ENCODE measurements at regions of chr6 and their contacts with region 1.

Region 1: GRCh38 chr6:16183187-16183664 is 54.3 kb downstream of the MYLIP start:
- DNase-seq: peak in 6 of 9 donors; percentile 25 to 64 (median 58)
- ATAC-seq: peak; percentile 35
- H3K4me3 ChIP-seq: no peak overlapping the region
- H3K4me3 Mint-ChIP-seq: peak overlapping the region in 5 of 10 donors; percentile 1 to 62 (median 39)
- H3K27ac ChIP-seq: no peak overlapping the region
- H3K27ac Mint-ChIP-seq: peak overlapping the region in 8 of 9 donors; percentile 9 to 73 (median 64)
- H3K4me1 ChIP-seq: peaks cover 10 to 21% of the 10 kb centered on the region in 2 donors
- H3K4me1 Mint-ChIP-seq: peaks cover 5 to 50% (median 43%) of the 10 kb centered on the region in 7 donors
- H3K27me3 ChIP-seq: no peaks in the 10 kb centered on the region
- H3K27me3 Mint-ChIP-seq: peaks cover 0 to 19% (median 0%) of the 10 kb centered on the region in 5 donors

Region 2: GRCh38 chr6:15662326-15663129 is 520.7 kb before region 1 on chr6 and contains the start of gene DTNBP1:
- CTCF ChIA-PET with region 1: no interaction called
- POLR2A ChIA-PET with region 1: no interaction called
- intact Hi-C with region 1: loop called in 1 of 2 experiments (anchors 1 kb)
- DNase-seq: peak; percentile 74 to 93 (median 84)
- ATAC-seq: peak; percentile 90
- H3K4me3 ChIP-seq: peak within 1 kb of the TSS; percentile 82
- H3K4me3 Mint-ChIP-seq: peak within 1 kb of the TSS; percentile 75 to 93 (median 88)
- H3K27ac ChIP-seq: peak within 1 kb of the TSS; percentile 71
- H3K27ac Mint-ChIP-seq: peak within 1 kb of the TSS; percentile 71 to 90 (median 82)
- H3K4me1 ChIP-seq: peaks cover 11 to 20% of the 10 kb centered on the region in 2 donors
- H3K4me1 Mint-ChIP-seq: peaks cover 20 to 47% (median 39%) of the 10 kb centered on the region in 7 donors
- H3K27me3 ChIP-seq: no peaks in the 10 kb centered on the region
- H3K27me3 Mint-ChIP-seq: peaks cover 0 to 20% (median 4%) of the 10 kb centered on the region in 5 donors
- total RNA-seq, gene DTNBP1: 19.8 to 30.8 (median 25.3) TPM

Region 3: DNA sequence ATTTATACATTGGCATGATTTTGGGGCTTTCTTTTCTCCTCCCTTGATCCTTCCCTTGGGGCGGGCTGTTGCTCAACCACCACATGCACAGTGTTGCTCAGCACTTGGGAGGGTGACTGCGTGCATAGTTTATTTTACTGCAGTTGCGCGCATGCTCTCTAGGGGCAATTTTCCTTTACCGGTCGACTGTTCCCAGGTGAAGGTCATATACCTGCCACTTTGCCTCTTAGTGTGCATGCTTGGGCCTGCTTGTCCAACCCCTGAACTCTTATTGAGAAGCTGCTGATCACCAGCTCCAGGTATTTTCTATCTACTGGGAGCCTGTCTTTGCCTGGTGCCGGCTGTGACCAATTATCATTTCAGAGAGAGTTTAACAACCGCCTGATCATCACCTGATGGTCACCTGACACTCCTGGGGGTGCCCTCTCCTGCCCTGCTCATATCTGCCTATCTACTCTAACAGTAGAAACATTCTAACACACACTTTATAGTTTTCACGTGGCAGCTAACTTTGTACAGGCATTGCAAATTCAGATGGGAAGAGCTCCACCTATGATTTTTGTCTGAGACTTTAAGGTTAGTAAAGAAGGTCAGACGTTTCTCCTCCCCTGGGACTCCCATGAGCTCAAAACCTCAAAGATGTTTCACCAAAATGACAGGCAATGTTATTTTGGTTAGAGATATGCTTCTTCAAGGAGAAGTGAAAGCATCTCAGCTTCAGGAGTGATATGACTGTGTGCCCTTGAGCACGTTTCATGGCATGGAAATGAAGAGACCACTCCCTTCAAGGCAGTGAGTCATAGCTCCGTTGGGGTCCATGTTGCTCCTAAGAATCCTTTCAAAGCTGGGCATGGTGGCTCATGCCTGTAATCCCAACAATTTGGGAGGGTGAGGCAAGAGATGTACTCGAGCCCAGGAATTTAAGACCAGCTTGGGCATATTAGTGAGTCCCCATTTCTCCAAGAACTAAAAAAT is 281.8 kb before region 1 on chr6:
- CTCF ChIA-PET with region 1: no interaction called
- POLR2A ChIA-PET with region 1: interaction called, 3 read pairs
- intact Hi-C with region 1: loop called in 1 of 2 experiments (anchors 5 kb)
- DNase-seq: peak in 1 of 9 donors; percentile 34
- ATAC-seq: peak; percentile 80
- H3K4me3 ChIP-seq: no peak overlapping the region
- H3K4me3 Mint-ChIP-seq: peak overlapping the region in 1 of 10 donors; percentile 70
- H3K27ac ChIP-seq: no peak overlapping the region
- H3K27ac Mint-ChIP-seq: peak overlapping the region in 1 of 9 donors; percentile 92
- H3K4me1 ChIP-seq: no peaks in the 10 kb centered on the region
- H3K4me1 Mint-ChIP-seq: peaks cover 0 to 35% (median 0%) of the 10 kb centered on the region in 7 donors
- H3K27me3 ChIP-seq: no peaks in the 10 kb centered on the region
- H3K27me3 Mint-ChIP-seq: peaks cover 0 to 7% (median 0%) of the 10 kb centered on the region in 5 donors

Region 4: GRCh38 chr6:16136621-16137450 is 46.4 kb before region 1 on chr6:
- CTCF ChIA-PET with region 1: interaction called, 4 read pairs
- POLR2A ChIA-PET with region 1: interaction called, 17 read pairs
- intact Hi-C with region 1: loop called in 1 of 2 experiments (anchors 1 kb)
- DNase-seq: peak in 6 of 9 donors; percentile 24 to 50 (median 32)
- ATAC-seq: peak; percentile 48
- H3K4me3 ChIP-seq: peak overlapping the region; percentile 35
- H3K4me3 Mint-ChIP-seq: peak overlapping the region; percentile 46 to 100 (median 82)
- H3K27ac ChIP-seq: no peak overlapping the region
- H3K27ac Mint-ChIP-seq: peak overlapping the region; percentile 49 to 90 (median 71)
- H3K4me1 ChIP-seq: peaks cover 68 to 75% of the 10 kb centered on the region in 2 donors
- H3K4me1 Mint-ChIP-seq: peaks cover 71 to 100% (median 97%) of the 10 kb centered on the region in 7 donors
- H3K27me3 ChIP-seq: no peaks in the 10 kb centered on the region
- H3K27me3 Mint-ChIP-seq: no peaks in the 10 kb centered on the region

Region 5: GRCh38 chr6:16216501-16217155 is 33.4 kb after region 1 on chr6:
- CTCF ChIA-PET with region 1: no interaction called
- POLR2A ChIA-PET with region 1: no interaction called
- intact Hi-C with region 1: no loop called
- DNase-seq: no peak
- ATAC-seq: no peak
- H3K4me3 ChIP-seq: no peak overlapping the region
- H3K4me3 Mint-ChIP-seq: no peak overlapping the region
- H3K27ac ChIP-seq: no peak overlapping the region
- H3K27ac Mint-ChIP-seq: no peak overlapping the region
- H3K4me1 ChIP-seq: no peaks in the 10 kb centered on the region
- H3K4me1 Mint-ChIP-seq: peaks cover 0 to 5% (median 0%) of the 10 kb centered on the region in 7 donors
- H3K27me3 ChIP-seq: no peaks in the 10 kb centered on the region
- H3K27me3 Mint-ChIP-seq: peaks cover 24 to 48% (median 37%) of the 10 kb centered on the region in 5 donors

Measured in naive thymus-derived CD4-positive, alpha-beta T cell (primary cell).